ENCODE measurements at regions of chr3 and their contacts with region 1.

Region 1: GRCh38 chr3:172054115-172054764 is 14.9 kb downstream of the FNDC3B start:
- DNase-seq: no peak
- CTCF ChIP-seq: no peak

Region 2: GRCh38 chr3:172039436-172040077 is 14.7 kb before region 1 on chr3 and contains the start of gene FNDC3B:
- CTCF ChIA-PET with region 1: interaction called, 15 read pairs
- POLR2A ChIA-PET with region 1: interaction called, 7 read pairs
- DNase-seq: peak; percentile 88
- CTCF ChIP-seq: no peak